T-cell (primary cell): ENCODE measurements at regions of chr9 and their contacts with region 1.

Region 1: DNA sequence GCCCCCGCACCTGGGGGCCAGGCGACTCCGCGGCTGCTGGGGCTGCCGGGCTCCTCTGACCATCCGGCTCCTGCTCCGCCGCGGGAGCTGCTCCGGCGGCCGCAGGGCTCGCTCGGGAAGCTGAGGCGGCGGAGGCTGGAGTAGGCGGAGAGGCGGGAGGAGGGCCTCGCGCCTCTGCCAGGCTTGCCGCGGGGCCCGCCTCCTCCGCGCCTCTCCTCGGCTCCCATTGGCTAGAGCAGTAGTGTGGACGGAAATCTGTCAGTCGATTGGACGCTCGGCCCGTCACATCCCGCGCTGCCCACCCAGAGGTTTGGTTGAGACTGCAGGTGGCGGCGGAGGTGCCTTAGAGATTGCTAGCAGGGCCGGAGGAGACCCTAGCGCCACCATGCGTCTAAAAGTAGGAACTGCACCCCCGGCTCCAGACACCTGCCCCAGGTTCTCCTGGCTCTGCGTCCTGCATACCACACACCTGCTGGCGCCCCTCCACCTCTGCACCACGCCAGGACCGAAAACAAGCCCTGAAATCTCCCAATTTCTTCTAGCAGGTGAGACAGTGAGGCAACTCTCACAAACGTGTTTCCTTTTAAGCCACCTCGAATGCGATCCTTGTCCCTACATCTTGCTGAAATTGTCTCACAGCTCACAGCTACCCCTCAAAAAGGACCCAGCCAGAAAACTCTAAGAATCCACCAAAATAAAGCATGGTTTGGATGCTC is at the start of gene SCAI:
- DNase-seq: peak; percentile 92 to 99 (median 98)
- ATAC-seq: peak; percentile 99
- H3K4me3 ChIP-seq: peak within 1 kb of the TSS; percentile 49 to 59
- H3K4me3 Mint-ChIP-seq: peak within 1 kb of the TSS; percentile 87 to 93 (median 93)
- H3K27ac ChIP-seq: no peak within 1 kb of the TSS
- H3K27ac Mint-ChIP-seq: peak within 1 kb of the TSS; percentile 79 to 82
- H3K4me1 ChIP-seq: peaks cover 2 to 14% of the 10 kb centered on the region in 2 experiments
- H3K4me1 Mint-ChIP-seq: peaks cover 32 to 50% (median 43%) of the 10 kb centered on the region in 3 donors
- H3K27me3 ChIP-seq: no peaks in the 10 kb centered on the region
- H3K27me3 Mint-ChIP-seq: no peaks in the 10 kb centered on the region
- total RNA-seq, gene SCAI: 11.4 to 14.3 (median 13.3) TPM

Region 2: GRCh38 chr9:125126019-125126746 is 17.4 kb before region 1 on chr9:
- CTCF ChIA-PET with region 1: interaction called, 9 to 11 read pairs
- POLR2A ChIA-PET with region 1: interaction called in 1 of 2 experiments, 3 read pairs
- DNase-seq: peak; percentile 64 to 95 (median 86)
- ATAC-seq: peak; percentile 99 to 100 (median 100)
- H3K4me3 ChIP-seq: peak overlapping the region in 1 of 2 donors; percentile 33
- H3K4me3 Mint-ChIP-seq: peak overlapping the region; percentile 29 to 58 (median 29)
- H3K27ac ChIP-seq: peak overlapping the region; percentile 27
- H3K27ac Mint-ChIP-seq: peak overlapping the region; percentile 94 to 95
- H3K4me1 ChIP-seq: peaks cover 27 to 35% of the 10 kb centered on the region in 2 experiments
- H3K4me1 Mint-ChIP-seq: peaks cover 33 to 40% (median 36%) of the 10 kb centered on the region in 3 donors
- H3K27me3 ChIP-seq: no peaks in the 10 kb centered on the region
- H3K27me3 Mint-ChIP-seq: no peaks in the 10 kb centered on the region